ENCODE measurements at regions of chr11 and their contacts with region 1.

Region 1: DNA sequence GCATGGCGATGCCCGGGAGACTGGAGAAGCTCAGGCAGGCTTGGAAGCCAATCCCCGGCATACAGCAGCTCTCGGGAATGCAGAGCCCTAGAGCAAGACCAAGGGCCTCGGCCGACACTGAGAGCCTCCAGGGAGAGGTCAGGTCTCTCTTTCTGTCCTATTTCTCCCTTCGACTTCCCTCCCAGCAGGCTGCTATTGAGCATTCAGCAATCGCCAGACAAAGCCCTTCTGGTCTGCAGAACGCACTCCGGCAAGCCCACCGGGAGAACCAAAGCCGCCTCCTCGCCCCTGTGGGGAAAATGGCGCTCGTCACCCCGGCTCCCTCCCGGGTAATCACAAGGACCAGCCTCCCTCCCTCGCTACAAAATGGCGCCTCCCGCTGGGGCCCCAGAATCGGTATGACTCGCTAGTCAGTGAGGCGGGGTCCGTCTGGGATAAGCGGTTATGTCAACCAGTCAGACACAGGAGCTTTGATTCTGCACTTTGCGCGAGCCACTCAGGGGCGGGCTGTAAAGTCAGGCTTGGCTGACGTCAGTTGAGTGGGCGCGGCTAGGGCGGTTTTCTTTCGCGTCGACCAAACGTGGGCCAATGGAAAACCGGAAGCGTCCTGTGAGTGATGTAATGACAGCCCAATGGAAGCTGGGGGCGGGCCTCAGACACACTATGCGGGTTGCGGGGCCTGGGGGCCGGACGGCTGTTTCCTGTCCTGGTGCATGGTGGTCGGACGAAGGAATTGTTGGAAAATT is at the start of gene ZNF143:
- DNase-seq: peak; percentile 100
- H3K4me3 Mint-ChIP-seq: peak within 1 kb of the TSS; percentile 96
- H3K27ac Mint-ChIP-seq: peak within 1 kb of the TSS; percentile 99
- H3K4me1 Mint-ChIP-seq: peaks cover 27% of the 10 kb centered on the region
- H3K27me3 Mint-ChIP-seq: no peaks in the 10 kb centered on the region
- total RNA-seq, gene ZNF143: 39.1 to 42.5 TPM

Region 2: DNA sequence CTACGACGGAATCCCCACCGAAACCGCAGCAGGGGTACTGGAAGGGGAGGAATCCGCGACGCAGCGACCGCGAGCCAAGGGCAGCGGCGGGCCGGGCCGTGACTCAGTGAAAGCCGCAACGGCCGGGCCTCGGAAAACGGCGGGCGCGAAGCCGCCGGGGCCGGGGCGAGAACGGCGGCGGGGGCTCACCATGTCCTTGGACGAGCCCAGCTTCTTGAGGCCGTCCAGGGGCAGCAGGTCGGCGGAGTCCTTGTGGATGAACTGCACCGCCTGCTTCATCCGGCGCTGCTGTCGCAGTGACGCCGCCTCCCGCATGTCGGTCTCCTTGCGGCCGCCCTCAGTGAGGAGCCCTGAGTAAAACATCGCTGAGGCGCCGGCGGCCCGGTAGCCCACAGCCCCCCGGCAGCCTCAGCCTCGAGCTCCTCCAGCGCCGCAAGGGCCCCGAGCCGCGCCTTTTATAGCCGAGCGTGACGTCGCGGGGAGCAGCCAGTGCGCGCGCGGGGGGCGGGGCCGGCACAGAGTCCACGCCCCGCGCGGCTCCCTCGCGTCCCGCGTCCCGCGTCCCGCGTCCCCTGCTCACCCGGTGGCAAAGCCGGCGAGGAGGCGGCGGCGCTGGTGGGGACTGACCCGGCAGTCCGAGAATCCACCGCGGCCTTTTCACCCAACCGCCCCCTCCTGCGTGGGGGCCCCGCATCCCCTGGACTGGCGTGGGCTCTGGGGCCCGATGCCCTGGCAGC is 456.8 kb before region 1 on chr11 and contains the start of gene NRIP3:
- CTCF ChIA-PET with region 1: no interaction called
- intact Hi-C with region 1: loop called (anchors 5 kb)
- DNase-seq: peak; percentile 67
- H3K4me3 Mint-ChIP-seq: peak within 1 kb of the TSS; percentile 68
- H3K27ac Mint-ChIP-seq: no peak within 1 kb of the TSS
- H3K4me1 Mint-ChIP-seq: peaks cover 24% of the 10 kb centered on the region
- H3K27me3 Mint-ChIP-seq: peaks cover 33% of the 10 kb centered on the region
- total RNA-seq, gene NRIP3: 3.0 to 3.5 TPM

Region 3: DNA sequence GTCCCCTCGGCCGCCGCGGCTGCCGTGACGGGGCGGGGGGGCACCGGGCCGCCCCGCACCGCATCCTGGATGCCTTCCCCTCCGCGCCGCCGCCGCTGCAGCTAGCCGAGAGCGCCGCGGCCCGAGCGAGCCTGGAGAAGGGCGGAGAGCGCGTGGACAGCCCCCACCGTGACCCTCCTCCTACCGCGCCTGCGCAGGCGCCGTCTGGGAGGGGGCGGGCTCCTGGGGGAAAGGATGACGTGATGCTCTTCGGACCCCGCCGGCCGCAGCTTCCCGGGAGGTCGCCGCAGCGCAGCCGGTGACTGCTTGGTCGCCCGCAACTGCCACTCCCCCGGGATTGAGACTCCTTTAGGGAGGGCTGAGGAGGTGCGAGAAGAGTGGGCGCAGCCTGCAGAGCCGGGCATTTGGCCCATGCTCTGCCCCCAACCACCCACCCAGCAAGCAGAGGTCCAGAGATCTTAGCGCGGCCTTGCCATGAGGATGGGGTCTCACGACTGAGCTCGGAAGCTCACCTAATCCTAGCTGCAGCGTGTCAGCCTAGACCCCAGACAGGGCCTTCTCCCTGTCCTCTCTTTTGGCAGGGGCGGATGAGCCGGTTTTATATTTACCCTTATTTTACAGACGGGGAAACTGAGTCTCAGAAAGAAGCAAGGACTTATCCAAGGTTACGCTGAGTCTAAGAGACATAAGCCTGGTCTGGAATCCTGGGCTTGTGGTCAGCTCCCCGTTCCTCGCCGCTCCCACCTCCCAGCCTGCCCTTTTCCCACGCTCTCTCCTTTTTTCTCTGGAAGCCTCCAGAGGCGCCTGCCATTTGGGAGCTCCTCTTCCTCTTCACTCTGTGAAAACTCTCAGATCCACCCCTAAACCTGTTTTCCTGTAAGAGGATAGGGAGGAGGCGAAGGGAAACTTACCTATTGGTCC is 195.0 kb before region 1 on chr11 and contains the start of gene DENND5A:
- CTCF ChIA-PET with region 1: no interaction called
- intact Hi-C with region 1: loop called (anchors 1 kb)
- DNase-seq: peak; percentile 62
- H3K4me3 Mint-ChIP-seq: peak within 1 kb of the TSS; percentile 84
- H3K27ac Mint-ChIP-seq: peak within 1 kb of the TSS; percentile 95
- H3K4me1 Mint-ChIP-seq: peaks cover 30% of the 10 kb centered on the region
- H3K27me3 Mint-ChIP-seq: peaks cover 3% of the 10 kb centered on the region
- total RNA-seq, gene DENND5A: 62.3 to 63.5 TPM

Region 4: DNA sequence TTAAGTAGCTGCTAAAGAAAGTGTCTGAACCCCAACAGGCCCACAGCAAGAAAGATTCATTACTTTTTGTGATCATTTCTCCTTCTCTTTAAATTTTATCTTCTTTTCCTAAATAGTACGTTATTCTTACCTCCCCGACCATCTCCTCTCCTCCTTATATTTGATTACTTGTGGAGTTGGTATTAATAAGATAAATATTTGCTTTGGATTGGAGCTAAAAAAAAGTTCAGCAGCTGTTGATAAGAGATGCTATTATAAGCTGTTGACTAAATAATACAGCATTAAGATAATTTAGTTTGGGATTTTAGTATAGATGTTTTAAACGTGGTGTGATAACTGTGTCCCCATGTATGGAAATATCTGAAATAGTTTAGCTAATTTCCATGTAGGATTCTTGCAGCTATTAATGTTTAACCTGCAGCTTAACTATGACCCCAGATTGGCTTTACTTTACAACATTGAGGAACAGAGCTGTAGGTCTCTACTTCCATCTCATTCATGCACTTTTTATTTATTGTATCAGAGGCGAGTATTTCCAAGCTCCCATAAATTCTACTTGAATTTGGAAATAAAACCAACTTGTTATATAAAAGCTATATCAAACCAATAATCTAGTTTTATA is 38.1 kb after region 1 on chr11:
- CTCF ChIA-PET with region 1: no interaction called
- intact Hi-C with region 1: no loop called
- DNase-seq: no peak
- H3K4me3 Mint-ChIP-seq: no peak overlapping the region
- H3K27ac Mint-ChIP-seq: no peak overlapping the region
- H3K4me1 Mint-ChIP-seq: no peaks in the 10 kb centered on the region
- H3K27me3 Mint-ChIP-seq: no peaks in the 10 kb centered on the region

Region 5: DNA sequence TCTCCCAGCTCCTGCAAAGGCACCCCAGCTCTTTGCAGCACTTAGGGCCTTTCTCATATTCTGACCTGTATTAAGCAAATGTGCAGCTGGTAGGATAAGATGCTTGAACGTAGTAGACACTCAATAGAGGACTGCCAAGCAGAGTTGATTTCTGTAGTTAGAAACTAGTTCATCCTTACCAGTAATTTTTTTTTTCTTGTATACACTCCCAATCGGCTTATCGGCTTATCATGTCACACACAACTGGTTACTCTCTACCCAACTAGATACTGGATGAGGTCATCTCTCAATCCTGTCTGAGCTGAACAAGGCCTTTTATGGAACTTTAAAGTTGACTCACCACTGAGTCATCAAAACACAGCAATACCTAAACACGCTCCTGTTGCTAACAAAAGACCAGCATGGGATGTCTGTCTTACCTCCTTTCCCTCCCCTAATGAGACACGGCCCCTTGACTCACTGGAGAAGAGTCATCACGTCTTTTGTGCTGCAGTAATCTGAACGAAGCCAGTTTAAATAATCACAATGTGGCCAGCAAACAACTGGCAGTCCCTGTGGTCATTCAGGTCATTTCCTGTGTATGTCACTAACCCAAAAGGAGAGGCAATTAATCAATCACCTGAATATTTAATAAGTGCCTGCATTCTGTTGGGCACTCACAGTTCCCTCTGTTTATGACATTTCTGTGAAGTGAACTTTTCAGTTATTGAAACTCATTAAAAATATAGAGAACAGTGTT is 105.5 kb after region 1 on chr11:
- CTCF ChIA-PET with region 1: no interaction called
- intact Hi-C with region 1: loop called (anchors 1 kb)
- DNase-seq: peak; percentile 81
- H3K4me3 Mint-ChIP-seq: no peak overlapping the region
- H3K27ac Mint-ChIP-seq: peak overlapping the region; percentile 65
- H3K4me1 Mint-ChIP-seq: peaks cover 9% of the 10 kb centered on the region
- H3K27me3 Mint-ChIP-seq: no peaks in the 10 kb centered on the region

Region 6: DNA sequence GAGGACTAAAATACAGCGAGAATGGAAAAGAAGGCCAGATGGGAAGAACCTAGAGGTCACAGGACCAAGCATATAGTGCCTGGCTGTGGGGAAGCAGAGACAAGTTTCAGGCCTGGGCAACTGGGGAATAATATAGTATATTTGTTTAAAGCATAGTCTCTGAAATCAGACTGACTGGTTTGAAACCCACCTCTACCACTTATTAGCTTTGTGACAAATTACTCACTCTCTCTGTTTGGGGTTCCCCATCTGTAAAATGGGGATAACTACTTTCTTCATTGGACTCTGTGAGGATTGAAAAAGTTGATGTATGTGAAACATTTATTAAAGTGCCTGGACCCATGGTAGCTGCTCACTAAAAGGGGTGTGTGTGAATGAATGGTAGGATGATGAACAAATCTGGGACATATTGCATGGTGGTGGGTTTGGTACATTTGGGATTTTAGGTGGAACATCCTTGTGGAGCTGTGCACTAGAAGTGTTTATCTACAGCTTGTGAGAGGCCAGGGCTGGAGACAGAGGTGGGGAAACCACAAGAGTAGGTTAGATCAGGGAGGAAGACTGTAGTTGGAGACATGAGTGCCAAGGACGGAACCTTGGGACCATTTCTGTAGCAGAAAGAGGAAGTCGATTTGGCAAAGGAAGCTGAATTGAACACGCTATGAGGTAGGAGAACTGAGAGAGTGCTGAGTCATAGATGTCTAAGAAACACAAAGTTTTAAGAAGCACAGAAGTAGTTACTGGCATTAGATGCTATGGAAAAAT is 256.0 kb after region 1 on chr11:
- CTCF ChIA-PET with region 1: no interaction called
- intact Hi-C with region 1: loop called (anchors 1 kb)
- DNase-seq: peak; percentile 41
- H3K4me3 Mint-ChIP-seq: no peak overlapping the region
- H3K27ac Mint-ChIP-seq: peak overlapping the region; percentile 66
- H3K4me1 Mint-ChIP-seq: peaks cover 29% of the 10 kb centered on the region
- H3K27me3 Mint-ChIP-seq: peaks cover 4% of the 10 kb centered on the region

Region 7: DNA sequence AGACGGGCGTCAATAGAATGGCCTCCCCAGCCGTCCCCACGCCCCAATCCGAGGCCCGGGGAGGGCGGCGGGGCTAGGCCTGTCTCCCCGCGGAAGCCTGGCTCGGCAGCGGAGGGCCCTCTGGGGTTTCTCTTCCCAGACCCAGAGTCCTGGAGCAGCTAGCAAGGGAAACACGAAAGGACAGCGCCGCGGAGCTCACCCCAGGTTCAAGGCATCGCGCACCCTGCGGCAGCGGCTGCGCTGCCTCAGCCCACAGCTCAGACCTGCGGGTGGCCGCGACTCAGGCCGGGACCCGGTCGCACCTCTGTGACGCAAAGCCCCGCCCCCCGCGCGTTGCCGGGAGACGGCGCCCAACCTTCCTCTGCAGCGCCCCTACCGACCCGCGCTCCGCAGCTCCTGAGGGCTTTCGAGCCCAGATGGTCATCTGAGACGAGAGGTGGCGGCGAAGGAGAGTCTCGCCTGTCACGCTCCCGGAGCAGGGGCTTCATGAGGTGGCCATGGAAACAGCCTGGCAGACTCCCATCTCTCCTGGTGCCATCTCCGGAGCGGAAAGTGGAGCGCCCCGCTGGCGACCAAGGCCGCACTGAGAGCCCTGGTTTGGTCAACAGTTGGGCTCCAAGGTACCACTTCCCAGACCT is 1080.5 kb after region 1 on chr11 and contains the start of gene RNF141:
- CTCF ChIA-PET with region 1: no interaction called
- intact Hi-C with region 1: loop called (anchors 5 kb)
- DNase-seq: peak; percentile 96
- H3K4me3 Mint-ChIP-seq: peak within 1 kb of the TSS; percentile 86
- H3K27ac Mint-ChIP-seq: no peak within 1 kb of the TSS
- H3K4me1 Mint-ChIP-seq: peaks cover 21% of the 10 kb centered on the region
- H3K27me3 Mint-ChIP-seq: no peaks in the 10 kb centered on the region
- total RNA-seq, gene RNF141: 20.9 to 21.8 TPM